HepG2 (cell line): ENCODE measurements at regions of chr2 and their contacts with region 1.

Region 1: DNA sequence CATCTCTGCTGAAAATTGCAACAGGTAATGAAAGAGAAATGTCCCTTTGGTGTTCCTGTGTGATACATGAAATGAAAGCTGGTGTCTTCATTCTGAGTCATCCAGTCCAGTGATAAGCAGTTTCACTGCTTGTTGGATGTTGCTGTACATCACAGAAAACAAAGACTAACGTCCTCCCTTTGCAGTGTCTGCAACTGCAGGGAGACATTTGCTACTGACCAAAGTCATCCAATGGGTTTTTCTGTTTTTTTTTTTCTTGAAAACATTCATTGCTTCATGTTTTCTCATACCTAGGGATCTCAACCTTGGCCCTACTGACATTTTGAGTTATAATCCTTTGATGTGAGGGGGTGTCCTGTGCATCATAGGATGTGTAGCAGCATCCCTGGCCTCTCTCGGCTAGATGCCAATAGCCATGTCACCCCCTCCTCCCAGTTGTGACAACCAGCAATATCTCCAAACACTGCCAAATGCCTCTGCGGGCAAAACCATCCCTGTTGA is 63.6 kb upstream of the FZD5 start:
- DNase-seq: peak; percentile 87
- ATAC-seq: peak; percentile 33
- H3K4me3 ChIP-seq: no peak overlapping the region
- H3K27ac ChIP-seq: peak overlapping the region; percentile 16
- H3K4me1 ChIP-seq: peaks cover 80% of the 10 kb centered on the region
- H3K27me3 ChIP-seq: no peaks in the 10 kb centered on the region
- CTCF ChIP-seq: no peak
- EP300 ChIP-seq: no peak; a peak in 1 of 4 replicates
- POLR2A ChIP-seq: no peak
- RAD21 ChIP-seq: no peak

Region 2: DNA sequence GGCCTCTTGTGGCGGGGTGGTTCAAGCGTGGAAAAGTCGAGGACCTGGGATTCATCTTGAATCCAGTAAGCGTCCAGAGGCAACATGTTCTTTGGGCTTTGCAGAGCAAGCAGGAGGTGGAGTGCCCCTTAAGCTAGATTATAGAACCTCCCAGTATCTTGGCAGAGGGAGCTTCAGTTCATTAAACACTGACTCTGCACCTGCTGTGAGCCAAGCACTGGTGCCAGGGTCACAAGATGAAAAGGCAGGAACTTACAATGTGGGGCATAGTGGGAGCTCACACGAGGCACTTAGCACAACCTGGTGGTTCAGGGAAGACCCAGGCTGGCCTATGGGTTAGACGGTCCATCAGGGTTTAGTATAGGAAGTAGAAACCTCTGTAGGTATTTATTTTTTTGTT is 56.2 kb before region 1 on chr2:
- CTCF ChIA-PET with region 1: no interaction called
- POLR2A ChIA-PET with region 1: interaction called, 12 read pairs
- in situ Hi-C with region 1: no loop called
- intact Hi-C with region 1: no loop called
- DNase-seq: no peak
- ATAC-seq: peak; percentile 19; the same call in 2 of the 3 replicates
- H3K4me3 ChIP-seq: no peak overlapping the region
- H3K27ac ChIP-seq: no peak overlapping the region
- H3K4me1 ChIP-seq: peaks cover 80% of the 10 kb centered on the region
- H3K27me3 ChIP-seq: no peaks in the 10 kb centered on the region
- CTCF ChIP-seq: no peak
- EP300 ChIP-seq: no peak
- POLR2A ChIP-seq: no peak
- RAD21 ChIP-seq: no peak

Region 3: GRCh38 chr2:207813221-207813916 is 19.9 kb before region 1 on chr2:
- CTCF ChIA-PET with region 1: no interaction called
- POLR2A ChIA-PET with region 1: interaction called, 108 read pairs
- in situ Hi-C with region 1: no loop called
- intact Hi-C with region 1: loop called (anchors 2 kb)
- DNase-seq: no peak
- ATAC-seq: 0 out of 3 replicates have a peak, but pooled peaks have one; percentile 6
- H3K4me3 ChIP-seq: no peak overlapping the region
- H3K27ac ChIP-seq: no peak overlapping the region
- H3K4me1 ChIP-seq: peaks cover 88% of the 10 kb centered on the region
- H3K27me3 ChIP-seq: no peaks in the 10 kb centered on the region
- CTCF ChIP-seq: no peak; the same call in 1 of the 2 replicates
- EP300 ChIP-seq: no peak
- POLR2A ChIP-seq: no peak
- RAD21 ChIP-seq: 0 out of 2 replicates have a peak, but pooled peaks have one; percentile 12

Region 4: GRCh38 chr2:207869784-207870778 is 36.8 kb after region 1 on chr2:
- CTCF ChIA-PET with region 1: no interaction called
- POLR2A ChIA-PET with region 1: interaction called, 37 read pairs
- in situ Hi-C with region 1: no loop called
- intact Hi-C with region 1: loop called (anchors 1 kb)
- DNase-seq: peak; percentile 100
- ATAC-seq: peak; percentile 95
- H3K4me3 ChIP-seq: peak overlapping the region; percentile 3 to 10 (median 3); a peak in 4 of 6 replicates
- H3K27ac ChIP-seq: peak overlapping the region; percentile 81
- H3K4me1 ChIP-seq: peaks cover 57% of the 10 kb centered on the region
- H3K27me3 ChIP-seq: no peaks in the 10 kb centered on the region
- CTCF ChIP-seq: no peak
- EP300 ChIP-seq: peak; percentile 97 to 99
- POLR2A ChIP-seq: peak in 1 of 2 experiments; percentile 57; a peak in 2 of 4 replicates
- RAD21 ChIP-seq: peak; percentile 36; the same call in 1 of the 2 replicates

Region 5: DNA sequence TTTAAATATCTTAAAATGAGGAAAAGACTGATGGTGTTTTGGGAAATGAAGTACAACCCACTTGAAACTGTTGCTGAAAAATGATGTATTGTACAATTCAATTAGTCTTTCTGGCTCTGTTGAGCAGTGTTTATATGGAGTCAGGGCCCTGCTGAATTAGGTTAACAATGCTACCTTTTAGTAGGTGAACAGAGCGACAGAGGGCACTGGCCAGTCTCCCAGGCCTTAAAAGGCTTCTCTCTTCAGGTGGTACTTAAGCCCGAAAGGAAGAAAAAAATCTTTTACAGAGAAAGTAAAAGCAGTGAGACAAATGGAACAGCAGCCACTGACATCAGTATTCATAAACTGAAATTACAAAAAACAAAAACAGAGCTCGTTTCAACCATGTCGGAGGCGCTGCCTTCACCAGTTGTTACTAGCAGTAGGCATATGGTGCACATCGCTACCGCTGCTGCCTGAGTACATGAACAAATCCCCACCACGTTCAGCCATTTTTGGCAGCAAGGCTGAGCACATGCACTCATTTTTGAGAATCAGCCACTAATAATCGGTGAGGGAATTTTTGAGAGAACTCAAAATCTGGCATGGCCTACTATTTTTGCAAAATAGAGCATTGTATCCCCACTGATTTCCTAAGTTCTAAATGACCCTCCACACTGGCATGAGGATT is 100.2 kb after region 1 on chr2:
- CTCF ChIA-PET with region 1: no interaction called
- POLR2A ChIA-PET with region 1: interaction called, 10 read pairs
- in situ Hi-C with region 1: no loop called
- intact Hi-C with region 1: no loop called
- DNase-seq: no peak
- ATAC-seq: no peak
- H3K4me3 ChIP-seq: no peak overlapping the region
- H3K27ac ChIP-seq: peak overlapping the region; percentile 9
- H3K4me1 ChIP-seq: peaks cover 63% of the 10 kb centered on the region
- H3K27me3 ChIP-seq: no peaks in the 10 kb centered on the region
- CTCF ChIP-seq: no peak
- EP300 ChIP-seq: no peak
- POLR2A ChIP-seq: no peak
- RAD21 ChIP-seq: no peak

Region 6: DNA sequence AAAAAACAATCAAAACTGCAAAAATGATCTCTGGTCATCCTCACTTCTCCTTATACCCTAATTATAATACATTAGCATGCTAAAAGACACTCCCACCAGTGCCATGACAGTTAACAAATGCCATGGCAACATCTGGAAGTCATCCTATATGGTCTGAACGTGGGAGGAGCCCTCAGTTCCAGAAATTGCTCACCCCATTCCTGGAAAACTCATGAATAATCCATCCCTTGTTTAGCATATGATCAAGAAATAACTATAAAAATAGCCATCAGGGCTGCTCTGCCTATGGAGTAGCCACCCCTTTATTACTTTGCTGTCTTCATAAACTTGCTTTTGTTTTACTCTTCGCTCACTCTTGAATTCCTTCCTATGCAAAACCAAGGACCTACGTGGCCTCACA is 362.2 kb after region 1 on chr2:
- CTCF ChIA-PET with region 1: no interaction called
- POLR2A ChIA-PET with region 1: no interaction called
- in situ Hi-C with region 1: no loop called
- intact Hi-C with region 1: no loop called
- DNase-seq: no peak
- ATAC-seq: no peak
- H3K4me3 ChIP-seq: no peak overlapping the region
- H3K27ac ChIP-seq: no peak overlapping the region
- H3K4me1 ChIP-seq: no peaks in the 10 kb centered on the region
- H3K27me3 ChIP-seq: peaks cover 0 to 12% of the 10 kb centered on the region in 2 experiments; a peak in 1 of 5 replicates
- CTCF ChIP-seq: no peak
- EP300 ChIP-seq: no peak
- POLR2A ChIP-seq: no peak
- RAD21 ChIP-seq: no peak